GM18951 (cell line): ENCODE measurements at regions of chr12 and their contacts with region 1.

Region 1: GRCh38 chr12:101759396-101760047 is 20.3 kb upstream of the SYCP3 start:
- POLR2A ChIP-seq: no peak

Region 2: DNA sequence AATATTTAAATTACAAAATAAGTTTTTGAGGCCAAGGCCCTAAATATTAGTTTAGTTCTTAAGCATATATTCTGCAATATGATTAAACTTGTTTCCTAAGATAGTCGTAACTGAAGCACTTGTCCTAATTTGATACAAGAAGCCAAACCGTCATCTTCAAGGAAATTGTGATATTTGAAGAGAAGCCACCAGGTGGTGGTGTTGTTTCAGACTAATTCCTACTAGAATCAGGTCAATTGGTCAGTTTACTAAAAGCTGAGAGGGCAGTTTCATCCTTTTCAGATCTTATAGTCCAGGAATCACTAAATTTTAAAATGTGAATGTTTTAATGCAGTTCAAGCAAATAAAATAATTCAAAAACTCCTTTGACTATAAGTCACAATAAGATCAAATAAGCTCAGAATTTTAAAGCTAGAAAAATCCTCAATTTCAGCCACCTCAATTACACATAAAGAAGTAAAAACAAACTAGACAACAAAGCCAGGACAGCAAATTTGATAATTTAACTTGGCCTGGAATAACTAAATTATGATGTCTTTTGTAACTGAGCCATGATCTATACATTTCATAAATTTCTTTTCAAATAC is 344.9 kb before region 1 on chr12:
- in situ Hi-C with region 1: loop called (anchors 10 kb)
- POLR2A ChIP-seq: no peak

Region 3: GRCh38 chr12:101521136-101521535 is 238.4 kb before region 1 on chr12:
- in situ Hi-C with region 1: no loop called
- POLR2A ChIP-seq: no peak